A549 (cell line): ENCODE measurements at regions of chr6 and their contacts with region 1.

Region 1: GRCh38 chr6:20533746-20534294 is 437 bp upstream of the CDKAL1 start:
- DNase-seq: no peak
- ATAC-seq: no peak
- H3K4me3 ChIP-seq: peak overlapping the region; percentile 58
- H3K27ac ChIP-seq: peak overlapping the region; percentile 77 to 90
- H3K4me1 ChIP-seq: peaks cover 6% of the 10 kb centered on the region; the same call in 1 of the 3 replicates
- CTCF ChIP-seq: no peak
- EP300 ChIP-seq: no peak
- POLR2A ChIP-seq: no peak
- RAD21 ChIP-seq: no peak

Region 2: DNA sequence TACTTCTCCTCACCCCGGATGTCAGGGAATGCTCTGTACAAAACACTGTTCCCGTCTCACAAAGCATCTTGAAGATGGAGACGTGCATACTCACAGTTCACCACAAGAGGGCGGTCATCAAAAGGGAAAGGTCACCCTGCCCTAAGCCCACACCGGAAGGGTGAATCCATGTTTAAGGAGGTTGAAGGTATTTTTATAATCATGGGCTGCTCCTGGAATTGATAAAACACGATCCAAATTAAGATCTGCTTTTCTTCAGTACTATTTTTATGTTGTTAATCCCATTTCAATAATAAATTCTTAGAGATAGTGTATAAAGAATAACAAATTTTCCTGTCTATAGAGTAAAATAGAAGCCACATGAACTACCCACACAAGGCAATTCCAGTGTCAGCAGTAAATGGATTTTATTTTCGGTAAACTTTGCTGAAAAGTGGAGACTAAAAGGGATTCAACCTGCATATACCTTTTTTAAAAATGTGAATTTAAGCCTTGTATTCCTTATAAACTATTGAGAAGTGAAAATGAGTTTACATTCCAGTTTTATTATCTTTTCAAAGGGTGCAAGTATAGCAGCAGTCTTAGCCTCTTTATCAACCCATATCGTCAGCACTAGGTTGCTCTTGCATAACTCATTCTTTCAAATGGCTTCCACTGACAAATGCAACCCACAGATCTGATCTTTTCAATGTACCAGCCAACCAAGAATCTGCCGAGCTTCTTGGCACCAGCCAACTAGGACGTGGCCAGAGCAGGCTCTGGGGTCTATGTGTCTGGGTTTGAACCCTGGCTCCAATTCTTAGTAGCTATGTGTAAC is 241.8 kb before region 1 on chr6:
- CTCF ChIA-PET with region 1: interaction called, 24 read pairs
- POLR2A ChIA-PET with region 1: no interaction called
- DNase-seq: peak; percentile 28 to 81
- ATAC-seq: peak; percentile 94 to 98
- H3K4me3 ChIP-seq: no peak overlapping the region
- H3K27ac ChIP-seq: no peak overlapping the region
- H3K4me1 ChIP-seq: no peaks in the 10 kb centered on the region
- CTCF ChIP-seq: peak; percentile 74
- EP300 ChIP-seq: no peak
- POLR2A ChIP-seq: no peak
- RAD21 ChIP-seq: peak; percentile 76 to 85

Region 3: GRCh38 chr6:20404641-20405032 is 129.2 kb before region 1 on chr6:
- CTCF ChIA-PET with region 1: interaction called, 14 read pairs
- POLR2A ChIA-PET with region 1: interaction called, 4 read pairs
- DNase-seq: peak; percentile 57 to 78
- ATAC-seq: peak; percentile 25 to 50; a peak in 3 of 6 replicates
- H3K4me3 ChIP-seq: peak overlapping the region; percentile 96
- H3K27ac ChIP-seq: peak overlapping the region; percentile 100
- H3K4me1 ChIP-seq: 0 out of 3 replicates have a peak, but pooled peaks cover 5% of the 10 kb centered on the region
- CTCF ChIP-seq: peak; percentile 31; the same call in 2 of the 3 replicates
- EP300 ChIP-seq: no peak
- POLR2A ChIP-seq: no peak
- RAD21 ChIP-seq: peak; percentile 30 to 38; a peak in 4 of 5 replicates

Region 4: DNA sequence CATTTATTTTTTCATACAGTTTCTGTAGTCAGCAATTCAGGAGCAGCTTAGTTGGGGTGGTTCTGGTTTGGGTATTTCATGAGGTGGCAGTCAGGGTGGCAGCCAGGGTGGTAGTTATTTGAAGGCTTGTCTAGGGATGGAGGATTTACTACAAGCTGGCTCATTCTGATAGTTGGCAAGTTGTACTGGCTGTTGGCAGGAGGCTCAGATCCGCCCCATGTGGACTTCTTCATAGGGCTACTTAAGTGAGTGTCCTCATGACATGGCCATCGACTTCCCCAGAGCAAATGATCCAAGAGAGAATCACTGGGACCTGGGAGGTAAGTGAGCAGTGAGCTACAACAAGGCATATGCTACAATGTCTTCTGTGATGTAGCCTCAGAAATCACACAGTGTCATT is 22.0 kb before region 1 on chr6:
- CTCF ChIA-PET with region 1: interaction called, 11 read pairs
- POLR2A ChIA-PET with region 1: no interaction called
- DNase-seq: no peak
- ATAC-seq: no peak
- H3K4me3 ChIP-seq: no peak overlapping the region
- H3K27ac ChIP-seq: no peak overlapping the region
- H3K4me1 ChIP-seq: no peaks in the 10 kb centered on the region
- CTCF ChIP-seq: no peak
- EP300 ChIP-seq: no peak
- POLR2A ChIP-seq: no peak
- RAD21 ChIP-seq: no peak